MCF 10A (cell line): ENCODE measurements at regions of chr1 and their contacts with region 1.

Region 1: DNA sequence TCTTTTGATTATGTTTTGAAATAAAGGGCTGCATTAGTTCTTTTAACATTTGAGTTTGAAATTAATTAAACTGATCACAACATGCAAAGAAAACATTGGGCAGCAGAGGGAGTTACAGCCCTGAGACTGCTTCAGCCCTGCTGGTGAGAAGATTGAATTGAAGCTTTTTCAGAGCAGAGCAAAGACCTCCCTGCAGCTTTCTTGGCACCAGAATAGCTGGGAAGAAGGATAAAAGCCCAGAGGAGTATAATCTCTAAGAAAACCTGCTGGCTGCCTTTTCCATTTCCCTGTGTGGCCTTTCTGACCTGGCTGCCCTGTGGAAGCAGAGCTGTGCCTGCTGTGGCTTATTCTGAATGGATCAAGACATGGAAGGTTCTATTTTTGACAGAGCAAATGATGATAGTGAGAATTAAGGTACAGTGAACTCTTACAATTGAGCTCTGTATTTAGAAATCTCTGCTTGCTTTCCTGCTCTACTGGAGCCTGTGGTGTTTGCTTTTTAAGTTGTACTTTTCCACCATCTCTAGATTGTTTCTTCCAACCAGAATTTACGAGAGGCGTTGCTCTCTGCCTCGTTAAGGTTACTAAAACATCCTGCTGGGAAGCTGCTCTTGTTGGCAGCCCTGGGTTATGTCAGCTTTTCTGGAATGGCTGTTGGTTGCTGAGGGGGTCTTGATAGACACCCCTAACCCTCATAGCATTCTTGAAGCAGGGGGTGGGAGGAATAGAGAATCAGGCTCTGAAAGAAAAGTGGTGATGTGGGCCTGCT is 9.9 kb downstream of the SNRPE start:
- DNase-seq: peak; percentile 86
- H3K4me3 Mint-ChIP-seq: no peak overlapping the region
- H3K27ac Mint-ChIP-seq: peak overlapping the region; percentile 74
- H3K4me1 Mint-ChIP-seq: peaks cover 3% of the 10 kb centered on the region
- H3K27me3 Mint-ChIP-seq: no peaks in the 10 kb centered on the region
- CTCF ChIP-seq: peak; percentile 100

Region 2: DNA sequence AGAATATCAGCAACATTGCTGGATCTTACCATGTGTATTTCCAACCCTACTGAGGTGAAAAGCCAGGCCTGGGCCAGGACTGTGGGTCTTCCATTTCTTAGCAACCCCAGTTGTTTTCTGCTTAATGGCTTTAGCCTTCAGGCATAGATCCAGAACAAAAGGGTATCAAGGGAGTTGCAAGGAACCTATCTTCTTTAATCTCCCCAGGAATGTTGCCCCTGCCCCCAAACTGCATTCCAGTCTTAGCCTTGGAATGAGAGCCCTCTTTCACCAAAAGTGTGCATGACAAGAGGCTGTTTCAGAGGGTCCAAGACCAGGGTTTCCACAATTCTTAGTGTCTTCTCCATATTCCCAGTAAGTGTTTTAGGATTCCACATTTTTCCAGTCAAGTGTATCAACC is 113.8 kb after region 1 on chr1:
- CTCF ChIA-PET with region 1: interaction called, 3 read pairs
- POLR2A ChIA-PET with region 1: no interaction called
- intact Hi-C with region 1: loop called (anchors 10 kb)
- DNase-seq: no peak
- H3K4me3 Mint-ChIP-seq: no peak overlapping the region
- H3K27ac Mint-ChIP-seq: no peak overlapping the region
- H3K4me1 Mint-ChIP-seq: no peaks in the 10 kb centered on the region
- H3K27me3 Mint-ChIP-seq: no peaks in the 10 kb centered on the region
- CTCF ChIP-seq: no peak

Region 3: GRCh38 chr1:204072931-204073836 is 201.9 kb after region 1 on chr1 and contains the start of gene SOX13:
- CTCF ChIA-PET with region 1: interaction called, 49 read pairs
- POLR2A ChIA-PET with region 1: interaction called, 60 read pairs
- intact Hi-C with region 1: loop called (anchors 1 kb)
- DNase-seq: peak; percentile 98
- H3K4me3 Mint-ChIP-seq: peak within 1 kb of the TSS; percentile 75
- H3K27ac Mint-ChIP-seq: peak within 1 kb of the TSS; percentile 55
- H3K4me1 Mint-ChIP-seq: peaks cover 20% of the 10 kb centered on the region
- H3K27me3 Mint-ChIP-seq: no peaks in the 10 kb centered on the region
- CTCF ChIP-seq: peak; percentile 34
- total RNA-seq, gene SOX13: 23.7 and 32.8 TPM in 2 replicates

Region 4: DNA sequence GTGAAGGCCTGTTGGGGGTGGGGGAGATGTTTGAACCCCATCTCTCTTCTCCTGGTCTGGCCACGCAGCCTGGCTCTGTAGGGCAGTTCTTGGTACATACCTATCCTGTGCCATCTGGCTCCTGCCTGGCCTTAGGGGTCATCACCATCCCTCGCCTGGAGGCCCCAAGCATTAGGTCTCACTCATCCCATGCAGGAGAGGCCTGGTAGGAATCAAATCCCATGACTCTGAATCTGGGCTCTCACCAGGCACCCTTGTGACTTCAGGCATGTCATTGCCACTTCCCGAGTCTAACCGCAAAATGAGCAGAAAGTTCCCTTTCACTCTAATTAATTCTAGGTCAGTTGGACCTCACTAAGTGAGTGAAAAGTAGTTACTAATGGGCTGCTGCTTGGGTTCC is 243.3 kb after region 1 on chr1:
- CTCF ChIA-PET with region 1: interaction called, 17 read pairs
- POLR2A ChIA-PET with region 1: no interaction called
- intact Hi-C with region 1: no loop called
- DNase-seq: no peak
- H3K4me3 Mint-ChIP-seq: no peak overlapping the region
- H3K27ac Mint-ChIP-seq: no peak overlapping the region
- H3K4me1 Mint-ChIP-seq: peaks cover 16% of the 10 kb centered on the region
- H3K27me3 Mint-ChIP-seq: no peaks in the 10 kb centered on the region
- CTCF ChIP-seq: no peak

Region 5: DNA sequence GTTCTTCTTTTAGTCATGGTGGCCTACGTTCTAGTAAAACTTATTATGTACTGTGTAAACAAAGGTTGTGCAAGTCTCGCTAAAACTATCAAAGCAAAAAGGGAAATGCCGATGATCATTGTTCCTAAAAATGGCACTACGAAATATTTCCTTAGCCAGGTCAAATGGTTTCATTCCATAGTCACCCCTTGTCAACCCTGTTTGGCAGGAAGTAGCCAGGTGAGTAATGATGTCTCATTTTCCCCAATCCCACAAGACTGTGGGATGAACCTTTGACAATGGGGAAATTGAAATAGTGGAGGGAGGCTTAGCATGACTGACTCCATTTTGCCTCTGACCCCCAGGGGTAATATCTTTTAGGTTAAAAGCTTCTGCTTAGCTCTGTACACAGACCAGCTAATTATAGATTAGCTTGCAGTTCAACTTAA is 300.5 kb after region 1 on chr1:
- CTCF ChIA-PET with region 1: interaction called, 10 read pairs
- POLR2A ChIA-PET with region 1: no interaction called
- intact Hi-C with region 1: no loop called
- DNase-seq: peak; percentile 89
- H3K4me3 Mint-ChIP-seq: no peak overlapping the region
- H3K27ac Mint-ChIP-seq: no peak overlapping the region
- H3K4me1 Mint-ChIP-seq: peaks cover 7% of the 10 kb centered on the region
- H3K27me3 Mint-ChIP-seq: no peaks in the 10 kb centered on the region
- CTCF ChIP-seq: no peak

Region 6: GRCh38 chr1:204242931-204243330 is 371.6 kb after region 1 on chr1:
- CTCF ChIA-PET with region 1: no interaction called
- POLR2A ChIA-PET with region 1: no interaction called
- intact Hi-C with region 1: no loop called
- DNase-seq: no peak
- H3K4me3 Mint-ChIP-seq: no peak overlapping the region
- H3K27ac Mint-ChIP-seq: no peak overlapping the region
- H3K4me1 Mint-ChIP-seq: no peaks in the 10 kb centered on the region
- H3K27me3 Mint-ChIP-seq: no peaks in the 10 kb centered on the region
- CTCF ChIP-seq: no peak